ENCODE measurements at regions of chr11 and their contacts with region 1.

Region 1: DNA sequence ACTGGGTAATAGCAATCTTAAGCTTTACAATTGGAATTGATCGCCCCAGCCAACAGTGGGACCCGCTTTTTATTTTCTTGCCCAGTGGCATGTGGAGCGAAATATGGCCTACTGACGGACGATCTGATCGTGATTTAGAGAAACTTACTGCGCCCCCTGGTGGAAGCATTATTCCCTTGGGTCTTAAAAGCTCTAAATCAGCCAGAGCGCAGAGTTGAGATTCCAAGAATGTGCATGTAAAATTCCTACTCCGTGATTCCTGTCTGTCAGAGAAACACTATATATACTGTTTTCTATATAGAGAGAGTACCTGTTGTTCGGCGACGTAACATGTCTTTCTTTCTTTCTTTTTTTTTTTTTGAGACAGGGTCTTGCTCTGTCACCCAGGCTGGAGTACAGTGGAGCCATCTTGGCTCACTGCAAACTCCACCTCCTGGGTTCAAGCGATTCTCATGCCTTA is 3.7 kb upstream of the DPF2 start:
- DNase-seq: peak; percentile 83
- H3K4me3 ChIP-seq: no peak overlapping the region
- H3K27ac ChIP-seq: no peak overlapping the region
- H3K27me3 ChIP-seq: no peaks in the 10 kb centered on the region
- CTCF ChIP-seq: peak; percentile 70

Region 2: GRCh38 chr11:65225279-65226102 is 104.5 kb before region 1 on chr11:
- CTCF ChIA-PET with region 1: interaction called, 32 read pairs
- POLR2A ChIA-PET with region 1: interaction called, 4 read pairs
- DNase-seq: peak; percentile 6
- H3K4me3 ChIP-seq: peak overlapping the region; percentile 53
- H3K27ac ChIP-seq: peak overlapping the region; percentile 75
- H3K27me3 ChIP-seq: no peaks in the 10 kb centered on the region
- CTCF ChIP-seq: peak; percentile 65

Region 3: DNA sequence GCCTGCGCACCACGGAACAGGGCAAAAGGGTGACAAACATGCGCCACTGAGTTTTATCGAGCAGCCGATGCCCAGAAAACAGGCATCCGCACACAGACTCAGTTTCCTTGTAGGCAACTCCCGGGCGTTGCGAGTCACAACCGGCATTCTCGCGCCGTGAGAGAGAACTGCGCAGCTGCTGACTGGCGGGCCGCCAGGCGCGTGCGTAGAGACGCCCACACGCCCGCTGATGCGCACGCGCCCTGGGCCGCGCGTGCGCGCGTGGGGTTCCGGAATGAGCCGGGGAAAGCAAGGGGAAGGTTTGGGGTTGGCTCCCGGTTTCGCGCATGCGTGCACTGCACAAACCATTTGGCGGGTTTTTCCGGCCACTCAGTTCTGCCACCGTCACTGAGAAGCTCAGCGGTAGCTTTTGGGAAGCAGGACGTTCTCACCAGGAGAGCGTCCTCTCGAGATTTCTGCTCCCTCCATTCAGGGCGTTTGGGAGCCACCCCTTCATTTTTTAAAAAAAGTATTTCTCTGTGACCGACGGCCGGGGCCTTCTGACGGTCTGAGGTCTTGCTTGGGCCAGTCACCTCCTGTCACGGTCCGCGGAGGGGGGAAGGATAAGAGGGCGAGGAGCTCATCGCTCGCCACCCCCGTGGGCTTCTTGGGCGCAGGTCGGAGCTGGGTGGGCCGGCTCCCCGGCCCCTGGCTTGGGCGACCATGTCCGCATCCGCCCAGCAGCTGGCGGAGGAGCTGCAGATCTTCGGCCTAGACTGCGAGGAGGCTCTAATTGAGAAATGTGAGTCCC is 68.2 kb before region 1 on chr11 and contains the start of gene POLA2:
- CTCF ChIA-PET with region 1: interaction called, 53 read pairs
- POLR2A ChIA-PET with region 1: interaction called, 7 read pairs
- DNase-seq: peak; percentile 86
- H3K4me3 ChIP-seq: peak within 1 kb of the TSS; percentile 83
- H3K27ac ChIP-seq: peak within 1 kb of the TSS; percentile 84
- H3K27me3 ChIP-seq: no peaks in the 10 kb centered on the region
- CTCF ChIP-seq: no peak
- polyA plus RNA-seq, gene POLA2: 10.4 and 14.1 TPM in 2 replicates

Region 4: DNA sequence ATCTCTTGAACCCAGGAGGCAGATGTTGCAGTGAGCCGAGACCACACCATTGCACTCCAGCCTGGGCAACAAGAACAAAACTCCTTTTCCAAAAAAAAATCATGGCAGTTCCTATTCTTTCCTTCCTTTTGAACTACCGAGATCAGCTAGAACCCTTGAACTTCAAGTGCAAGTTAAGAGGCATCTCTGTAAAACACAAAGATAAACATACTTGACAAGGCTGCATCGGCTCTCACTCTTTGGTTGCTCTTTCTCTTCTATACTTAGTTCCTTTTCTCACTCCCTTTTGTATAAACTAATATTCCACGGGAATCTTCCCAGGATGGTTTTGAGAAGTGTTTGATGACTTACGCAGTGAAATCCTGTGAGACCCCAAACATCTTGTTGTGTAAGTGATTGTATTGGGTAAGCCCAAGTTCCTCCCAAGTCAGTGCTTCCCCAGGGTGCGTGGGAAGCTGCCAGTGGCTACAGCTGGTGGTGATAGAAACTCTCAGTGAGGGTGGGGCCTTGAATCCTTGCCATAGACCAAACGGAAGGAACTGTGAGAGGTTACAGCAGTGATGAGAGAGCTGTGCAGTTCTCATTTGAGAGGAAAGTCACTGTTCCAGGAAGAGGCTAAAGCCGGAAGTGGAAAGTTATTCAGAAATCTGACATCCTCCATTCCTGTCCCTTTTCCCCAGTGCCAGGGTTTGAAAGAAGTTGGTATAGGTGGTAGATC is 39.4 kb before region 1 on chr11:
- CTCF ChIA-PET with region 1: interaction called, 24 read pairs
- POLR2A ChIA-PET with region 1: interaction called, 13 read pairs
- DNase-seq: peak; percentile 99
- H3K4me3 ChIP-seq: peak overlapping the region; percentile 29
- H3K27ac ChIP-seq: peak overlapping the region; percentile 100
- H3K27me3 ChIP-seq: no peaks in the 10 kb centered on the region
- CTCF ChIP-seq: no peak

Region 5: GRCh38 chr11:65301491-65302329 is 28.3 kb before region 1 on chr11:
- CTCF ChIA-PET with region 1: interaction called, 24 read pairs
- POLR2A ChIA-PET with region 1: interaction called, 5 read pairs
- DNase-seq: no peak
- H3K4me3 ChIP-seq: no peak overlapping the region
- H3K27ac ChIP-seq: peak overlapping the region; percentile 68
- H3K27me3 ChIP-seq: no peaks in the 10 kb centered on the region
- CTCF ChIP-seq: no peak

Region 6: GRCh38 chr11:65314501-65315203 is 15.3 kb before region 1 on chr11 and contains the start of gene CDC42EP2:
- CTCF ChIA-PET with region 1: interaction called, 203 read pairs
- POLR2A ChIA-PET with region 1: interaction called, 39 read pairs
- DNase-seq: no peak
- H3K4me3 ChIP-seq: peak within 1 kb of the TSS; percentile 90
- H3K27ac ChIP-seq: peak within 1 kb of the TSS; percentile 93
- H3K27me3 ChIP-seq: no peaks in the 10 kb centered on the region
- CTCF ChIP-seq: no peak
- polyA plus RNA-seq, gene CDC42EP2: 14.3 and 21.1 TPM in 2 replicates

Region 7: DNA sequence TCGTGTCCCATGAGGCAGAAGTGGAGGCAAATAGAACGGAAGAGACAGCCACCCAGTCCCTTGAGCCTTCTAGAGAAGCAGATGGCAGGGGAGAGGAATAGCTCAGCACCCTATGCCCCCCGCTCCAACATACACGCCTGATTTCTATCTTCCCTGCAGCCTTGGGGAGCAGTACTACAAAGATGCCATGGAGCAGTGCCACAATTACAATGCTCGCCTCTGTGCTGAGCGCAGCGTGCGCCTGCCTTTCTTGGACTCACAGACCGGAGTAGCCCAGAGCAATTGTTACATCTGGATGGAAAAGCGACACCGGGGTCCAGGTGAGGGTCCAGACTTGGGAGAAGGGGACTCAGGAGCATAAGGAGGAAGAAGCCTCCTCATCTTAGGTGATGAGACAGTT is 10.3 kb after region 1 on chr11:
- CTCF ChIA-PET with region 1: interaction called, 18 read pairs
- POLR2A ChIA-PET with region 1: interaction called, 3 read pairs
- DNase-seq: no peak
- H3K4me3 ChIP-seq: no peak overlapping the region
- H3K27ac ChIP-seq: no peak overlapping the region
- H3K27me3 ChIP-seq: no peaks in the 10 kb centered on the region
- CTCF ChIP-seq: no peak

Region 8: DNA sequence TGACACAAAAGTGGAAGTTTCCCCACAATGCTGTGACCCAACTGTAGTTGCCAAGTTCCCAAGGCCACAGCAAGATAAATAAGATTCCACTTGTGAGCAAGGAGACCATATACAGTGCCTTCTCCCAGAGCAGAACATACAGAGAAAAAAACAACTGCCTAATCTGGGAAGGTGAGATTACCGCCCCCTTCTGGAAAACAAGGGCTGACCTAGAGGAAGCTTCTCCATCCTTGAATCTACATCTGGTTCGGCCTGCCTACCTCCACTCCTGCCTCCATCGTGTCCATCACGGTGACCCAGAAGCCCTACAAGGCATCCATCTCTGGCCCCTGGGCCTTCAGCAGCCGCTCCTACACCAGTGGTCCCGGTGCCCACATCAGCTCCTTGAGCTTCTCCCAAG is 396.7 kb after region 1 on chr11:
- CTCF ChIA-PET with region 1: no interaction called
- POLR2A ChIA-PET with region 1: no interaction called
- DNase-seq: no peak
- H3K4me3 ChIP-seq: no peak overlapping the region
- H3K27ac ChIP-seq: no peak overlapping the region
- H3K27me3 ChIP-seq: peaks cover 10% of the 10 kb centered on the region
- CTCF ChIP-seq: no peak